ENCODE measurements at regions of chr5 and their contacts with region 1.

Region 1: GRCh38 chr5:68287976-68288706 is 72.6 kb downstream of the PIK3R1 start:
- DNase-seq: peak; percentile 63
- ATAC-seq: peak; percentile 79
- H3K4me3 Mint-ChIP-seq: peak overlapping the region; percentile 82
- H3K27ac Mint-ChIP-seq: peak overlapping the region; percentile 92
- H3K4me1 Mint-ChIP-seq: peaks cover 85% of the 10 kb centered on the region
- H3K27me3 Mint-ChIP-seq: no peaks in the 10 kb centered on the region

Region 2: DNA sequence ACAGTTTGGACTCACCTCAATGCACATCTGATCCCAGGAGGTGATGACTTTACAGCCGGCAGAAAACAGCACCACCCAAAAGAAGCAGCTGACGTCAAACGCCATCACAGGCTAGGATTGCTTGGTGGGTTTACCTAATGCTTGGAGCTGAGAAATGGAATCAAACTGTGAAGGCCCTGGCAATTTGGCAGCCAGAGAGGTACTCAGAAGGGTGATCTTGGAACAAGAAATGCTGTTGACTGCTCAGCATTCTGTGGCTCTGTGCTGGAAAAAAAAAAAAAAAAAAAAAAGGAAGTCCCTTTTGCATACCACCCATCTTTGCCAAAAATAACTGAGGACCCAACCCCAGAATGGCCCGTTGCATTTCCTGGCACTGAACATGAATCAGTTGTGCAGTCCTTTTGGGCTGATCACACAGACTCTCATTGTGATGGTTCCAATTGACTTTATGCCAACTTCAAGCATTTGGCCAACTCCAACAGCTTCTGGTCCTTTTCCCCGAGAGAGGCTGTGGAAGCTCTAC is 1091.5 kb before region 1 on chr5 and contains the start of gene CD180:
- CTCF ChIA-PET with region 1: no interaction called
- POLR2A ChIA-PET with region 1: no interaction called
- intact Hi-C with region 1: no loop called
- DNase-seq: no peak
- ATAC-seq: no peak
- H3K4me3 Mint-ChIP-seq: no peak within 1 kb of the TSS
- H3K27ac Mint-ChIP-seq: peak within 1 kb of the TSS; percentile 34
- H3K4me1 Mint-ChIP-seq: peaks cover 27% of the 10 kb centered on the region
- H3K27me3 Mint-ChIP-seq: no peaks in the 10 kb centered on the region
- total RNA-seq, gene CD180: 0.12 TPM in 1 of 2 experiments, not detected in the other

Region 3: DNA sequence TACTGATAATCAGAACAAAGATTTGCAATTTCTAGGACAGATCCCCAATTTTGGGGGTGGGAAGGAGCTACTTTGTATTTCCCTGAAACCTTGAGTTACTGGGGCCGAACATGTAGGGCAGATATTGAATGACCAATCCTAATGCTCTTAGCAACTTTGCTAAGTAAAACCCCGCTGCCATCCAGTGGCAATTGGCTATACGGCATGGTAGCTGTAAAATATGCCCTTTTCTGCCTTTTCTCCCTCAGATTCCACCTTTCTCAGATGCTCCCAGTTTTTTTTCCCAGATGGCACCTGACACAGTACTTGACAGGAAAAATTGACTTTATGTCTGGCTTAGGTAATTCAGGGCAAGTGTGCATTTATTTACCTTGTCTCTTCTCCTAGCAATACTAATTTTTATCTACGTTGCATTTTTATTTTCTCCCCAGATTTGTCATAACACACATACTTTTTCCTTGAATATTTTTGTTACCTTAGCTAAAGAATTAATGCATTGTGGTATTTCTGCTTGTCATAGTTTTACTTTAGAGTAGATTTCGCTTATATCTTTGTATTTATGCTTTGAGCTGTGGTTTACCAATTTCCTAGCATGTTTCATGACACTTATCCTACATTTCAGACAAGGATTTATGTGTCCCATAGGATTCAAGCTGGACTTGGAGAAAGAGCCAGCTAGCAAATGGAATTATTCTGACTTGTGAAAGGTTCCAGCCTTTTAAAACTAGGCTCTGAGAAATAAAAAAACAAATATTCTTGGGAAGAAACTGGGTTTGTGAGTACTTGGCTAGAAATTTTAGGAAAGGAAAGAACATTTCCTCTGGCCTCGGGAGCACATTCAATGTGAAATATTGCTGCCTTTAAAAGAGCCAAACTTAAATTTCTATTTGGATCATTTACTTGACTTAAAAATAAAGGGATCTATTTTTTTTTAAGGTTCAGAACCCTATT is 35.2 kb before region 1 on chr5:
- CTCF ChIA-PET with region 1: interaction called, 14 read pairs
- POLR2A ChIA-PET with region 1: no interaction called
- intact Hi-C with region 1: no loop called
- DNase-seq: peak; percentile 72
- ATAC-seq: peak; percentile 33
- H3K4me3 Mint-ChIP-seq: no peak overlapping the region
- H3K27ac Mint-ChIP-seq: no peak overlapping the region
- H3K4me1 Mint-ChIP-seq: peaks cover 94% of the 10 kb centered on the region
- H3K27me3 Mint-ChIP-seq: no peaks in the 10 kb centered on the region

Region 4: GRCh38 chr5:68303038-68303738 is 15.0 kb after region 1 on chr5:
- CTCF ChIA-PET with region 1: interaction called, 41 read pairs
- POLR2A ChIA-PET with region 1: no interaction called
- intact Hi-C with region 1: no loop called
- DNase-seq: no peak
- ATAC-seq: peak; percentile 62
- H3K4me3 Mint-ChIP-seq: no peak overlapping the region
- H3K27ac Mint-ChIP-seq: peak overlapping the region; percentile 11
- H3K4me1 Mint-ChIP-seq: peaks cover 49% of the 10 kb centered on the region
- H3K27me3 Mint-ChIP-seq: no peaks in the 10 kb centered on the region

Region 5: DNA sequence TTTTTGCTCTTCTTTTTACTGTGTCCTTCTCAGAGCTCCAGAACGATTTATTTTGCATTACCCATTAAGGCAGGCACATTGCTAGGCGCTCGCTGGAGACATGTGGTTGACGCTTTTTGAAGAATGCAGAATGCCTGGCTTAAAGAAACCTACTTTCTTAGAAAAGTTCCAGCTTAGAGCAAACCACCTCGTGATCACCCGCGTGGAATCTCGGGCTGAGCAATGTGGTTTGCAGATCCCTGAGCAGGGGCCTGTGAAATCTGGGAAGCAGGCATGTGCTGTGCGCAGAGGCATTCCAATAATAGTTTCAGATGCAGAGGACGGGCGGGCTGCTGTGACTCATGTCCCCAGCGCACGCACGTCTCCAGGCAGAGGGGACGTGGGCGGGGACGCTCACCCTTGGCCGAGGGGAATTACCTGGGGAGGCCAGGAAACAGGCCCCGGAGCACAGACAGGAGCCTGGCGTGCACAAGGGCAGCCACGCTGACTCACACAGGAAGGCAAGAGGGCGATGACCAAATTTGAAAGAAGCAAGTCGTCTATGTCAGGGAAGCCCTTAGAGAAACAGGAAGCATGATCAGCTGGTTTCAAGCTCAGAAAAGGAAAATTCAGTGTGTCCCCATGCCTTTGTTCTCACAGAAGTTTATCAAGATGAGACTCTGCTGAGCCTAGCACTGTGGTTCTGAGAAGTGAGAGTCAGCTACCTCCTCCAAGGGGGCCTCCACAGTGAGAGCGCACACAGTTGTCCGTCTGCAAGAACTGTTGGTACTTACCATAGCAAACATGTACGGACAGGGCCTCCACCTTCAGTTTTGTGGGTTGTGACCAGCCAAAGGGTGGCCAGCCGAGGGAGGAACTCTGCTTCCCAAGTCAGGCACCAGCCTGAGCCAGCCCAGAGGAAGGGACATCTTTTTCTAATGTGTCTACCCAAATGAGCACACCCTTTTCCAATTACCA is 146.1 kb after region 1 on chr5:
- CTCF ChIA-PET with region 1: interaction called, 34 read pairs
- POLR2A ChIA-PET with region 1: no interaction called
- intact Hi-C with region 1: loop called (anchors 1 kb)
- DNase-seq: peak; percentile 98
- ATAC-seq: peak; percentile 96
- H3K4me3 Mint-ChIP-seq: peak overlapping the region; percentile 37
- H3K27ac Mint-ChIP-seq: peak overlapping the region; percentile 84
- H3K4me1 Mint-ChIP-seq: peaks cover 57% of the 10 kb centered on the region
- H3K27me3 Mint-ChIP-seq: peaks cover 12% of the 10 kb centered on the region

Region 6: GRCh38 chr5:68661237-68661636 is 373.1 kb after region 1 on chr5:
- CTCF ChIA-PET with region 1: no interaction called
- POLR2A ChIA-PET with region 1: no interaction called
- intact Hi-C with region 1: loop called (anchors 5 kb)
- DNase-seq: peak; percentile 47
- ATAC-seq: peak; percentile 70
- H3K4me3 Mint-ChIP-seq: no peak overlapping the region
- H3K27ac Mint-ChIP-seq: no peak overlapping the region
- H3K4me1 Mint-ChIP-seq: peaks cover 2% of the 10 kb centered on the region
- H3K27me3 Mint-ChIP-seq: no peaks in the 10 kb centered on the region

Region 7: DNA sequence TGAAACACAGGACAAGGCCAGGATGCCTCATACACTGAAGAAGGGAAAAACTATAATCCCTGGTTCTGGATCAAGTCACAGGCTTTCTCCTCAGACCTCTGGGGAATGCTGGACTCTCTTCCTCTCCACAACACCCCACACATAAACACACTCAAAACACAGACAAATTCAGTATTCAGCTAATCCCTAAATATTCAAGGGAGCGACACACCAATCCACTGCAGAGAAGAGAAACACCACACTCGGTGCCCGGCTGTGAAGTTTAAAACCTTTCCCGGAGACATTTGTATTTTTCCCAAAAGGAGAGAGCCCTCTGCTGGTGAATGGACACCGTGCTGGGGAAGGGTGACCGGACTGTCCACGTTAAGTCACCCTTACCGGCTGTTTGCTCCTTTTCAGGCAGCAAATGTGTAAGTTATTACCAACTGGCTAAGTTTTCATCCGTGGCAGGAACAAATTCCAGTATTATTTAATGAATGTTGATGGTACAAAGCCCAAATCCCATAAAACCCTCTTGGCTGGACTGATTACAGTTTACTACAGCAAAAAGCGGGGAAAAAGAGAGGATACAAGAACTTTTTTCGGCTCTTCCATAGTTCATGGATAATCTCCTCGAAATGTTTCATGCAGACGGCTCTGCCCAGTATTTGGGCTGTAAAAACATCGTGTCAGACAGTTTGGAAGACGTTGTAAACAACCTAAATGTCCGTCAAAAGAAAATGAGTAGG is 674.8 kb after region 1 on chr5:
- CTCF ChIA-PET with region 1: no interaction called
- POLR2A ChIA-PET with region 1: no interaction called
- intact Hi-C with region 1: loop called in 1 of 2 experiments (anchors 5 kb)
- DNase-seq: peak; percentile 34
- ATAC-seq: no peak
- H3K4me3 Mint-ChIP-seq: no peak overlapping the region
- H3K27ac Mint-ChIP-seq: no peak overlapping the region
- H3K4me1 Mint-ChIP-seq: peaks cover 2% of the 10 kb centered on the region
- H3K27me3 Mint-ChIP-seq: no peaks in the 10 kb centered on the region

Measured in activated CD4-positive, alpha-beta T cell treated with anti-CD3 and anti-CD28 coated beads for 36 hours (primary cell).